ENCODE measurements at regions of chr5 and their contacts with region 1.

Region 1: GRCh38 chr5:141691867-141692532 is 10.0 kb upstream of the ARAP3 start:
- DNase-seq: peak; percentile 74 to 88 (median 79)
- H3K4me3 ChIP-seq: peak overlapping the region; percentile 56
- H3K4me3 Mint-ChIP-seq: peak overlapping the region; percentile 70 to 85 (median 78)
- H3K27ac ChIP-seq: peak overlapping the region; percentile 4
- H3K27ac Mint-ChIP-seq: peak overlapping the region in 6 of 8 donors; percentile 17 to 92 (median 75)
- H3K4me1 ChIP-seq: peaks cover 15% of the 10 kb centered on the region
- H3K4me1 Mint-ChIP-seq: peaks cover 20 to 24% (median 20%) of the 10 kb centered on the region in 3 donors
- H3K27me3 ChIP-seq: no peaks in the 10 kb centered on the region
- H3K27me3 Mint-ChIP-seq: peaks cover 8 to 13% of the 10 kb centered on the region in 2 donors

Region 2: GRCh38 chr5:141650851-141651727 is 40.9 kb before region 1 on chr5 and contains the start of gene FCHSD1:
- CTCF ChIA-PET with region 1: interaction called, 12 read pairs
- POLR2A ChIA-PET with region 1: interaction called, 4 read pairs
- DNase-seq: peak; percentile 81 to 90 (median 82)
- H3K4me3 ChIP-seq: peak within 1 kb of the TSS; percentile 78
- H3K4me3 Mint-ChIP-seq: peak within 1 kb of the TSS; percentile 82 to 99 (median 95)
- H3K27ac ChIP-seq: peak within 1 kb of the TSS; percentile 73
- H3K27ac Mint-ChIP-seq: peak within 1 kb of the TSS; percentile 85 to 99 (median 96)
- H3K4me1 ChIP-seq: peaks cover 26% of the 10 kb centered on the region
- H3K4me1 Mint-ChIP-seq: peaks cover 40 to 59% (median 49%) of the 10 kb centered on the region in 3 donors
- H3K27me3 ChIP-seq: no peaks in the 10 kb centered on the region
- H3K27me3 Mint-ChIP-seq: peaks cover 0 to 4% of the 10 kb centered on the region in 2 donors
- total RNA-seq, gene FCHSD1: 31.1 to 33.7 TPM

Region 3: DNA sequence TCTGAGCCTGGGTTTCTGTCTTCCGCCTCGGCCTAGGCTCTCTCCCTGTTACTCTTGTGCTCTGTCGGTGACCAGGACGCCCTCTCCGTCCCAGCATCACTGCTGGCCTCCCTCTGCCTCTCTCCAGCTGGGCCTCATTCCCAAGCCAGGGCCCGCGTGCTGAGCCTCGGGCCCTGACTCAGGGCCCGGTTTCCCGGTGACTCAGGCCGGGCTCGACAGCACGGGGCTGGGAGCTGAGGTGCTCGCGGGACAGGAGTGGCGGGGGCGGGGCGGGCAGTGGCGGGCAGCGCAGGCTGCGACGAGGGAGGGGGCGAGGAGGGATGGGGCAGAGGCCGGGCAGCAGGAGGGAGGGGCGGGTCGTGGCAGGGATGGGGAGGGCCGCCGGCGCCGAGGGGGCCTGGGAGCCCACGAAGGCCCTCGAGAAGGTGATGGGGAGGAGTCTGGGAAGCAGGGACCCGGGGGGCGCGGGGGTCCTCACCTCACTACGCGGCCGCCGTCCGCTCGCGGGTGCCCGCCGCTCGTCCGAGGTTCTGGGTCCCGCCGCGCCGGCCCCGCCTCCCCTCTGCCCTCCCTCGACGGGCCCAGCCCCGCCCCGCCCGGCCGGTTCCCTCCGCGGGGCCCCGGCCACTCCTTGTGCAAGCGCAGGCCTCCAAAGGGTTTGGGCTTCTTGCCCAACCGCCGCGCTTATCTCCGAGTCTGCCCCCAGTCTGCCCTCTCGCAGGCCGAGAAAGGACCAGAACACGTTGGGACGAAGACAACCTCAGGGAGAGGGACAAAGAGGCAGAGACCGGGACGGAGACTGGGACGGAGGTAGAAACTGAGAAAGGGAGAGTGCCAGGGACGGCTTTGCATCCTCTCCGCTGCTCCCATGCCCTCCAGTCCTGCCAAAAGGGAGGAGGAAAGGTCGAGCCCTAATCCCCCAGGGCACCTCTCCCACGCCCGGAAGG is 10.0 kb before region 1 on chr5 and contains the start of gene ARAP3:
- CTCF ChIA-PET with region 1: interaction called, 61 read pairs
- POLR2A ChIA-PET with region 1: interaction called, 17 read pairs
- DNase-seq: peak in 4 of 5 donors; percentile 17 to 64 (median 39)
- H3K4me3 ChIP-seq: peak within 1 kb of the TSS; percentile 50
- H3K4me3 Mint-ChIP-seq: peak within 1 kb of the TSS; percentile 65 to 91 (median 84)
- H3K27ac ChIP-seq: peak within 1 kb of the TSS; percentile 38
- H3K27ac Mint-ChIP-seq: peak within 1 kb of the TSS; percentile 7 to 93 (median 78)
- H3K4me1 ChIP-seq: peaks cover 27% of the 10 kb centered on the region
- H3K4me1 Mint-ChIP-seq: peaks cover 25 to 46% (median 29%) of the 10 kb centered on the region in 3 donors
- H3K27me3 ChIP-seq: no peaks in the 10 kb centered on the region
- H3K27me3 Mint-ChIP-seq: peaks cover 0 to 4% of the 10 kb centered on the region in 2 donors
- total RNA-seq, gene ARAP3: 6.9 to 7.9 TPM

Region 4: GRCh38 chr5:141858084-141858765 is 166.2 kb after region 1 on chr5:
- CTCF ChIA-PET with region 1: no interaction called
- POLR2A ChIA-PET with region 1: no interaction called
- DNase-seq: no peak
- H3K4me3 ChIP-seq: no peak overlapping the region
- H3K4me3 Mint-ChIP-seq: peak overlapping the region in 1 of 7 donors; percentile 15
- H3K27ac ChIP-seq: no peak overlapping the region
- H3K27ac Mint-ChIP-seq: no peak overlapping the region
- H3K4me1 ChIP-seq: no peaks in the 10 kb centered on the region
- H3K4me1 Mint-ChIP-seq: no peaks in the 10 kb centered on the region
- H3K27me3 ChIP-seq: peaks cover 4% of the 10 kb centered on the region
- H3K27me3 Mint-ChIP-seq: peaks cover 14 to 24% of the 10 kb centered on the region in 2 donors

Region 5: GRCh38 chr5:141923448-141924352 is 231.7 kb after region 1 on chr5 and contains the start of gene DELE1:
- CTCF ChIA-PET with region 1: interaction called, 12 read pairs
- POLR2A ChIA-PET with region 1: interaction called, 3 read pairs
- DNase-seq: peak; percentile 83 to 93 (median 88)
- H3K4me3 ChIP-seq: peak within 1 kb of the TSS; percentile 92
- H3K4me3 Mint-ChIP-seq: peak within 1 kb of the TSS; percentile 80 to 98 (median 90)
- H3K27ac ChIP-seq: peak within 1 kb of the TSS; percentile 97
- H3K27ac Mint-ChIP-seq: peak within 1 kb of the TSS; percentile 92 to 99 (median 98)
- H3K4me1 ChIP-seq: peaks cover 15% of the 10 kb centered on the region
- H3K4me1 Mint-ChIP-seq: peaks cover 16 to 47% (median 37%) of the 10 kb centered on the region in 3 donors
- H3K27me3 ChIP-seq: no peaks in the 10 kb centered on the region
- H3K27me3 Mint-ChIP-seq: no peaks in the 10 kb centered on the region
- total RNA-seq, gene DELE1: 48.8 to 50.2 TPM

Region 6: DNA sequence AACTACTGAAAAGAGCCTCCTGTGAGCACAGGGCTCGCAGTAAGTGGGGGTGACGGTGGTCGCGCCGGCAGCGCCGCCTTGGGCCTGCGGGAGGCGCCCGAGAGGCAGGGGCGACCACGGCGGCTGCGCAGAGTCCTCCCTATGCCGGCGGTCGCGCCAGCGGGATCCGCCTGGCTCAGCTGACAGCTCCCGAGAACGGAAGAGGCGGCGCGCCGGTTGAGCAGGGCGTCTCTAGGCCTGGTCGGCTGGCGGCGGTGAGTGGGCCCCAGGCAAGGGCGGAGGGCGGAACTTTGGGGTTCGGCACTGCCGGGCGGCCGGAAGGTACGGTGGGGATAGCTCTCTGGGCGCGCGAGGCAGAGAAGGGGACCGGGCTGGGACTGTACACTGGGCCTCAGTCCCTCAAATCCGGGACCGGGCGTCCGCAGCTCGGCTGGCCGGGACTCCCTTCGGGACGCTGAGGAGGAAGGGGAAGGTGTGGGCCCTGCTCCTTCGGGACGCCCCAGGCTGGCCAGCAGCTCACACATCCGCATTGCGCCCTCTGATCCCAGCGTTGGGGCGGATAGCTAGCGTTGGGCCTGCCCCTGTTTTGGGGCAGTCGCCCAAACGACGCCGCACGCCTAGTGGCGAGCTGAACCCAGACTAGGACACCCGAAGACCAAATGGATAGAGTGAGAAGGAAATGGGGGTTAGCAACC is 277.1 kb after region 1 on chr5 and contains the start of gene RNF14:
- CTCF ChIA-PET with region 1: interaction called, 53 read pairs
- POLR2A ChIA-PET with region 1: interaction called, 17 read pairs
- DNase-seq: peak; percentile 91 to 96 (median 94)
- H3K4me3 ChIP-seq: peak within 1 kb of the TSS; percentile 69
- H3K4me3 Mint-ChIP-seq: peak within 1 kb of the TSS; percentile 87 to 97 (median 95)
- H3K27ac ChIP-seq: peak within 1 kb of the TSS; percentile 74
- H3K27ac Mint-ChIP-seq: peak within 1 kb of the TSS; percentile 96 to 99 (median 98)
- H3K4me1 ChIP-seq: peaks cover 17% of the 10 kb centered on the region
- H3K4me1 Mint-ChIP-seq: peaks cover 24 to 44% (median 40%) of the 10 kb centered on the region in 3 donors
- H3K27me3 ChIP-seq: no peaks in the 10 kb centered on the region
- H3K27me3 Mint-ChIP-seq: no peaks in the 10 kb centered on the region
- total RNA-seq, gene RNF14: 46.2 to 49.6 TPM

Region 7: DNA sequence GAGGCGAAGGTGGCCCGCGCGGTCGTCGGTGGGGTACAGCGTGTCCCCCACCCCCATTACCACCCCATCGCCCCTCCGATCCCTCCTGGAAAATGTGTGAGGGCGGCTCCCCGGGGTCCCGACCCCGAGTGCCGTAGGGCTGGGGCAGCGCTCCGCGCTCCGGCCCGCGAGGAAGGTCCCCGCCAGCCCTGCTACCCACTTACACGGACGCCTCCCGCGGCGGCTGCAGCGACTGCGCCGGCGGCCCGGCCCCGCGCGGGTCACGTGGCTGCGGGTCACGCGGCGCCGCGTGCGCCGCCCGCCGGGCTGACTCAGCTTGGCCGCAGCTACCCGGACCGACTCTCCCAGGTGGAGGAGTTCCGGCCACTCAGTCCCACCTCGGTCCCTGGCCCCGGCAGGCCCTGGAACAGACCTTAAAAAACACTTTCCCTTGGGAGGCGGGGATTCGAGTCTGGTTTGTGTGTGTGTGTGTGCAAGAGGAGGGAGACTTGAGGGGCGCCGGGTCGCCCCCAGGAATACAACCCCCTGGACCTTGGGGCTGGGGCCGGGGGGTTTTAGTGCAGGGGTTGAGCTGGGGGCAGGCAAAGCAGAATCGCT is 320.9 kb after region 1 on chr5 and contains the start of gene GNPDA1:
- CTCF ChIA-PET with region 1: interaction called, 14 read pairs
- POLR2A ChIA-PET with region 1: no interaction called
- DNase-seq: peak; percentile 64 to 78 (median 66)
- H3K4me3 ChIP-seq: peak within 1 kb of the TSS; percentile 82
- H3K4me3 Mint-ChIP-seq: peak within 1 kb of the TSS; percentile 83 to 94 (median 89)
- H3K27ac ChIP-seq: peak within 1 kb of the TSS; percentile 67
- H3K27ac Mint-ChIP-seq: peak within 1 kb of the TSS; percentile 88 to 97 (median 92)
- H3K4me1 ChIP-seq: peaks cover 62% of the 10 kb centered on the region
- H3K4me1 Mint-ChIP-seq: peaks cover 55 to 73% (median 63%) of the 10 kb centered on the region in 3 donors
- H3K27me3 ChIP-seq: no peaks in the 10 kb centered on the region
- H3K27me3 Mint-ChIP-seq: no peaks in the 10 kb centered on the region
- total RNA-seq, gene GNPDA1: 62.4 to 70.0 TPM

Measured in CD8-positive, alpha-beta memory T cell (primary cell).